ENCODE measurements at regions of chr2 and their contacts with region 1.

Region 1: DNA sequence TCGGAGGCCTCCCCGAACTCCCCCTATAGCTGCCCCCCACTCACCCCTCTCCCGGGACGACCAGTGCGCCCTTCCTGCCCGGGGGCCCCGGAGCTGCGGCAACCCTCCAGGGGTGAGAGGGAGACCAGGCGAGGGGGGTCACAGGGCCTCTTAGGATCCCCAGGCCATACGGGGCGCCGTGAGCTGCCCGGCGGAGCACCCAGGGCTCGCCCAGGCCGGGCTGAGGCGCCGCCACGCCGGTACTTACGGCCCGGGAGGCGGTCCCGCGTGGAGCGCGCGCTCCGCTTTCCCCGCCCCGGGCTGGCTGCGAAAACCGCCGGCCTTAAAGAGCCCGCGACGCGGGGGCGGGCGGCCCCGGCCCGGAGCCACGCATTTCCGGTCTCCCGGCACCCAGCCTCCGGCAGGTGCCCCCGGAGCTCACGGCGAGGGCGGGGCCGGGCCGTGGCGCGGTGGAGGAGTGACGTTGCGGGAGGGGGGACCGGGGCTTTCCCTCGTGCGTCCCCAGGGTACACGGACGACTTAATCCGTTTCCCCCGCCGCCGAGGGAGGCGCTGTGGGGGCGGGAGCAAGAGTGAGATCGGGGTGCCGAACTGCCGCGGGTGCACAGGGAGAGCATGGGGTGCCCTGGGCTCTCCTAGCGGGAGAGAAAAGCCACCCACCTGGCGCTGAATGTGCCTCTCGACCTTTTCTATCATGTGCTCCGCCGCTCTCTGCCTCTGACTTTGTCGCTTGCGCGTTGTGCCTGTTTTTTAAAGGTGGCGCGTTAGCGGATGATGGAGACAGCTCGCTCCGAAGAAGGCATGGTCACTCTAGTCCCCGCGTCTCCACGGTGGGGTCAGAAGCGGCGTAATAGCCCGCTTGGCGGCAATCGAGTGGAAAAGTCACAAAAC is at the start of gene METTL21A:
- DNase-seq: peak; percentile 75 to 93
- H3K4me3 ChIP-seq: peak within 1 kb of the TSS; percentile 87 to 98
- H3K27ac ChIP-seq: peak within 1 kb of the TSS; percentile 78 to 94
- H3K4me1 ChIP-seq: peaks cover 0 to 38% (median 7%) of the 10 kb centered on the region in 4 donors
- H3K27me3 ChIP-seq: no peaks in the 10 kb centered on the region
- CTCF ChIP-seq: peak; percentile 35 to 44

Region 2: DNA sequence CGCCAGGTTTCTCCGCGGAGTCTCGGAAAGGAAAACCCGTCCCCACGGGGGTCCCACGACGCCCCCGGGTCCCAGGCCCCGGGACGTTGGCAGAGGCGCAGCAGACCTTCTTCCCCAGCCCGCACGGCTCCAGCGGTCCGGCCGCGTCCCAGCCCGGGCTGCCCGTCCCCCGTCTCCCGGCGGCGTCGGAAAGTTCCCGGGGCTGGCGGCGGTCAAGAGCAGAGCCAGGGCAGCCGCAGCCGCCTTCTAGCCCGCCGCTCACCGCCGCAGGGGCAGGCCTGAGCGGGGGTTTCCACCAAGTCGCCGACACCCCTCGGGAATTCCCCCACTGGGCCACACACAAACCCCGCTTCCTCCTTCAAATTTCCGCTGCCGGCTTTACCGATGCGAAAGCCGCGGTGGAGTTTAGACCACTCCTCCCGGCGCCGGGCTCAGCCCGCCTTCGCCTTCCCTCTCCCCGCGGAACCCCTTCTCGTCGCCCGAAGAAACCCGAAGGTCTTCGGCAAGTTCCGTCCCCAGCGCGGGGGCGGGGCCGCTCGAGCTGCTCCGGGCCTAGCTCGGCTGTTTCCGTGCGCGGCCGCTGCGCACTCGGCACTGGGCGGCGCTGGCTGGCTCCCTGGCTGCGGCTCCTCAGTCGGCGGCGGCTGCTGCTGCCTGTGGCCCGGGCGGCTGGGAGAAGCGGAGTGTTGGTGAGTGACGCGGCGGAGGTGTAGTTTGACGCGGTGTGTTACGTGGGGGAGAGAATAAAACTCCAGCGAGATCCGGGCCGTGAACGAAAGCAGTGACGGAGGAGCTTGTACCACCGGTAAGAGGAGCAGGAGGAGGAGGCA is 95.7 kb before region 1 on chr2 and contains the start of gene CREB1:
- intact Hi-C with region 1: loop called (anchors 5 kb)
- DNase-seq: peak; percentile 98 to 99
- H3K4me3 ChIP-seq: peak within 1 kb of the TSS; percentile 70 to 84
- H3K27ac ChIP-seq: peak within 1 kb of the TSS; percentile 93 to 96
- H3K4me1 ChIP-seq: peaks cover 0 to 37% (median 21%) of the 10 kb centered on the region in 4 donors
- H3K27me3 ChIP-seq: no peaks in the 10 kb centered on the region
- CTCF ChIP-seq: peak in 1 of 2 experiments; percentile 8

Region 3: DNA sequence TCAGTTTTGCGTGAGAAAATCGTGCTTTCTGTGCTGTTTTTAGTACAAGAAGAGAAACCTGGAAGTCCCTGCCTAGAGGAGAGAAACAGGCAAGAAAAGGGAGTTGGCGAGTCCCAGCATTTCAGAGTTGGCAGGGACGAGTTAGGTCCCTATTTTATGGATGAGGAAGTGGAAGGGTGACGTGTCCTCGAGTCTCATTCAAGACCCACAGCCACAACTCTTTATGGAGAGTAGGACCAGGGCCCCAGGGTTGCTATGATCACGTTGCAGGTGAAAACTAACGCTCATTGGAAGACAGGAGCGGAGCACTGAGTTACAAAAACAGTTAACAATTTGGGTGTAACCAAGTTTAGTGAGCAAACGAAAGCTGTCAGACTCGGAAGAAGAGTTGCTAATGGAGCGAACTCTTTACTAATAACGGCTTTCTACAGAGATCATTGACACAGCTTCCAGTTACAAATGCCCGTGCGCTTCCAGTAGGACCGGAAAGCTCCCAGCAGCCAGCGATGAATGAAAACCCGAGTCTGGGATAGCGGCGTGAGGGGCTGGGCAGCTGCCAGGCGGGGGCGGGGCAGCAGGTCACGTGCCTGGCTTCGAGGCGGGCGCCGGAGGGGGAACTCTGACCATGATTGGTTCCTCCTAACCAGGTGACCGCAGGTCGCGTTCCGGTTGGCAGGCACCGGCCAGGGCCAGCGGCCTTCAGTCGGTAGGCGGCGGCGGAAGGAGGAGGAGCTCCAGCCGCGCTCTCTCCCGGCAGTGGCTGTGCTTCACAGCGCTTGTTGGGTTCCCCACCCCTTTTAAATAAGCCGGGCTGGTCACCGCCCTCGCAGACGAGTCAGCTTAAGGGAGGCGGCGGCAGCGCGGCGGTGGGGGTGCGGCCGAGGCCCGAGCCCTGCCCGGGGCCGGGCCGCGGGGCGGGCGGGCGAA is 85.8 kb after region 1 on chr2 and contains the start of gene CCNYL1:
- intact Hi-C with region 1: loop called (anchors 10 kb)
- DNase-seq: peak; percentile 98 to 99
- H3K4me3 ChIP-seq: peak within 1 kb of the TSS; percentile 79 to 99
- H3K27ac ChIP-seq: peak within 1 kb of the TSS; percentile 86 to 91
- H3K4me1 ChIP-seq: peaks cover 0 to 29% (median 11%) of the 10 kb centered on the region in 4 donors
- H3K27me3 ChIP-seq: no peaks in the 10 kb centered on the region
- CTCF ChIP-seq: peak; percentile 46 to 54

Region 4: DNA sequence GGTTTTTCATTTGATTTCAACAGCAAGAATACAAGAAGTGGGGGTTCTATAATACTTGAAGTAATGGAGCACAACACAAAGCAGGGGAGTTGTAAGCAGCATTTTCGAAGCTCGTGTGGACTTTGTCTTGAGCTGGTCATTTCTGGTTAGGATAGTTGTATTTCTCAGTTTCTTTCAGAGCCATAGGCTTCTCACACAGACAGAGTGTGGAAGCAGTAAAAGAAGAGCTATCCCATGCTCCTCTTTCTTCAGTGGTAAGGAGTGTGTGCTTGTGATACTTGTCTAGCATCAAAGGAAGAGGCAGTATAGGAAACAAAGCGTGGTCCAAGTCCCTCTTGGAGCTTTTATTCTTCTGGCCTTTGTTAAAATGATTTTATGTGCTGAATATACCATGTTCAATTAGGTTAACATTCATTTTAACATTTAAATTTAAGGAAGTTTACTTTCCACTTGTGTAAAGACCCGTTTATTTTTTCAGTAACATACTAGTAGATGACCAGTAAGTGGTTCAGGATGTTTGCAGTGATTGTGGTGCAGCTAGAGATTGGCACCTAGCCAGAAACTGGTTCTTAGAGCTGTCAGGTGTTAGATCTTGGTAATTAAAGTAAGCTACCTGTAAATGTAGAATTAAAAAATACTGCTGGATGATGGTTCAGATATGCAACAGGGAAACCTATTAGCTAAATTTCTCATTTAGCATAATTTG is 100.8 kb after region 1 on chr2:
- intact Hi-C with region 1: no loop called
- DNase-seq: no peak
- H3K4me3 ChIP-seq: no peak overlapping the region
- H3K27ac ChIP-seq: no peak overlapping the region
- H3K4me1 ChIP-seq: peaks cover 0 to 3% (median 0%) of the 10 kb centered on the region in 4 donors
- H3K27me3 ChIP-seq: no peaks in the 10 kb centered on the region
- CTCF ChIP-seq: no peak

Region 5: DNA sequence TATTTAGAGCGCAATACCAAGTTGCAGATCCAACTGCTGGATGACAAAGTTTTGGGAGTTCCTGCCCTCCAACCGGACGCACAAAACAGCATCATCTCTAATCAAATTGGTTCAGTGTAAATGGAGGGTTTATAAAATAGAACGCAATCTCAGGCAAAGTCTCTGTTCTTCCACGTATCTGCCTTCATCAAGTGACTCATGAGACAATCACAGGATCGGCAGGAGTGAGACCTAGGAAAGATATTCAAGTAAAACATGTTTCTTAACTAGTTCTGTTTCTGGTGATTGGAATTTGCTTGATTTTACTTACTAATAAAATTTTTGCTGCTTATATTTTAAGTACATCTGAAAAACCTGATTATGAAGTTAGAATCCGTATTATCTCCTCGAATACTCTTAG is 136.9 kb after region 1 on chr2:
- intact Hi-C with region 1: no loop called
- DNase-seq: no peak
- H3K4me3 ChIP-seq: no peak overlapping the region
- H3K27ac ChIP-seq: no peak overlapping the region
- H3K4me1 ChIP-seq: peaks cover 0 to 5% (median 2%) of the 10 kb centered on the region in 4 donors
- H3K27me3 ChIP-seq: no peaks in the 10 kb centered on the region
- CTCF ChIP-seq: no peak

Region 6: GRCh38 chr2:207833251-207833751 is 208.0 kb after region 1 on chr2:
- intact Hi-C with region 1: no loop called
- DNase-seq: no peak
- H3K4me3 ChIP-seq: no peak overlapping the region
- H3K27ac ChIP-seq: no peak overlapping the region
- H3K4me1 ChIP-seq: peaks cover 0 to 16% (median 10%) of the 10 kb centered on the region in 4 donors
- H3K27me3 ChIP-seq: no peaks in the 10 kb centered on the region
- CTCF ChIP-seq: no peak

Region 7: DNA sequence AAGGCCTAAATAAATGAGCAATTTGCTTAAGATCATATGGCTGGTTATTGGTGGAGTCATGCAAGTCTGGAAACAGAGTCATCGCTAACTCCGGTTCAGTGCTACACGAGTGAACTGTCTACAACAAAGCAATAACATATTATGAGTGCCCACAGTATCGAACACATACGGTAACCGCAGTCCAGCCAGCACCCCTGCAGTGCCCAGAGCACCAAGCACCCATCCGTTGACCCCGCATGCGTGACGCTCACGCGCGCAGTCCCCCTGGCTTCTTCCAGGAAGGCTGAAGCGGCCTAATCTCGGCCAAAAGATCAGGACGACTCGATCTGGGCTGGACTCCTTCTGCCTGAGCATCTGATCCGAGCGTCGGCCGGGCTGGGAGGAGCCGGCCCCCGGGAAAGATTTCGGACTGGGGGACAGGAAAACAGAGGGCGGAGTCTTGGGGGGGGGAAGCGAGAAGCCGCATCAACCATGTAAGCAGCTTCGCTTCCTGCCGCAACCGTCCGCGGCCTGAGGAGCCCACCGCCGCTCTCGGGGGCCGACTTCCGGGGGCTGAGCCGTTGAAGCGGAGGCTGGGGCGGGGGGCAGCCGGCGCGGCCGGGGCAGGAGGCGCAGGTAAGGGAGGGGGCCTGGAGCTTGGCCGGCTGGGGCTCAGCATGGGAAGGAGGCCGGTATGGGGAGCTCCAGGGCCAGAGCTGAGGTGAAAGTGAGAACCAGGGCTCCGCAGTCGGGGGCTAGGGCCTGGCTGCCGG is 640.7 kb after region 1 on chr2 and contains the start of gene PIKFYVE:
- intact Hi-C with region 1: loop called (anchors 10 kb)
- DNase-seq: peak; percentile 96 to 98
- H3K4me3 ChIP-seq: peak within 1 kb of the TSS; percentile 84 to 99
- H3K27ac ChIP-seq: peak within 1 kb of the TSS; percentile 96 to 98
- H3K4me1 ChIP-seq: peaks cover 0 to 38% (median 24%) of the 10 kb centered on the region in 4 donors
- H3K27me3 ChIP-seq: no peaks in the 10 kb centered on the region
- CTCF ChIP-seq: peak in 1 of 2 experiments; percentile 13